GM12878 (cell line): ENCODE measurements at regions of chr6 and their contacts with region 1.

Region 1: GRCh38 chr6:69732640-69733039 is 64.2 kb downstream of the LMBRD1 start:
- DNase-seq: peak; percentile 11
- ATAC-seq: peak; percentile 90
- H3K4me3 ChIP-seq: no peak overlapping the region
- H3K27ac ChIP-seq: no peak overlapping the region
- H3K4me1 ChIP-seq: no peaks in the 10 kb centered on the region
- H3K27me3 ChIP-seq: no peaks in the 10 kb centered on the region
- CTCF ChIP-seq: peak; percentile 10 to 48 (median 29); a peak in 3 of 6 replicates
- EP300 ChIP-seq: no peak
- POLR2A ChIP-seq: no peak
- RAD21 ChIP-seq: peak; percentile 47

Region 2: GRCh38 chr6:69466979-69467570 is 265.6 kb before region 1 on chr6:
- CTCF ChIA-PET with region 1: no interaction called
- POLR2A ChIA-PET with region 1: no interaction called
- RAD21 ChIA-PET with region 1: no interaction called
- SMC1A ChIA-PET with region 1: no interaction called
- in situ Hi-C with region 1: no loop called
- intact Hi-C with region 1: no loop called
- DNase-seq: no peak
- ATAC-seq: no peak
- H3K4me3 ChIP-seq: no peak overlapping the region
- H3K27ac ChIP-seq: no peak overlapping the region
- H3K4me1 ChIP-seq: no peaks in the 10 kb centered on the region
- H3K27me3 ChIP-seq: no peaks in the 10 kb centered on the region
- CTCF ChIP-seq: no peak
- EP300 ChIP-seq: no peak
- POLR2A ChIP-seq: no peak
- RAD21 ChIP-seq: no peak

Region 3: DNA sequence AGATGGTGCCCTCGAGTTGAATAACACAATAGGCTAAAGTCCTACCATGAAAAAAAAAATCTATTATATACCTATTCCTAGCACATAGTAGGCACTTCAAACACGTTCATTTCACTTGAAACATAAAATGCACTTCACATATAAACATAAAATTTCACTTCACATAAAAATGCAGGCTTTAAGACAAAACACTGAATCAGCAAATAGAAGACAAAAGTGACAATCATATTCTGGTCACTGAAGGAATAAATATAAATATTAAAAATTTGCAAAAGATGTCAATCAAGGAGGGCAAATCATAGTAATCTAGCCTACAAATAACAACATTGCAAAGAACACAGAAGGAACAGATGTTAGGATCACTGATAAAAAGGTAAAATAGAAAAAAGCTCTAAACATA is 89.0 kb before region 1 on chr6:
- CTCF ChIA-PET with region 1: no interaction called
- POLR2A ChIA-PET with region 1: no interaction called
- RAD21 ChIA-PET with region 1: no interaction called
- SMC1A ChIA-PET with region 1: no interaction called
- in situ Hi-C with region 1: no loop called
- intact Hi-C with region 1: no loop called
- DNase-seq: no peak
- ATAC-seq: no peak
- H3K4me3 ChIP-seq: no peak overlapping the region
- H3K27ac ChIP-seq: no peak overlapping the region
- H3K4me1 ChIP-seq: no peaks in the 10 kb centered on the region
- H3K27me3 ChIP-seq: no peaks in the 10 kb centered on the region; a peak in 1 of 4 replicates
- CTCF ChIP-seq: no peak
- EP300 ChIP-seq: no peak
- POLR2A ChIP-seq: no peak
- RAD21 ChIP-seq: no peak

Region 4: GRCh38 chr6:69791065-69791471 is 58.4 kb after region 1 on chr6:
- CTCF ChIA-PET with region 1: interaction called, 8 read pairs
- POLR2A ChIA-PET with region 1: interaction called, 5 read pairs
- RAD21 ChIA-PET with region 1: interaction called, 12 read pairs
- SMC1A ChIA-PET with region 1: interaction called, 19 read pairs
- in situ Hi-C with region 1: no loop called
- intact Hi-C with region 1: no loop called
- DNase-seq: no peak
- ATAC-seq: peak; percentile 59
- H3K4me3 ChIP-seq: peak overlapping the region; percentile 43
- H3K27ac ChIP-seq: peak overlapping the region; percentile 46; the same call in 1 of the 2 replicates
- H3K4me1 ChIP-seq: peaks cover 27% of the 10 kb centered on the region
- H3K27me3 ChIP-seq: no peaks in the 10 kb centered on the region
- CTCF ChIP-seq: no peak
- EP300 ChIP-seq: no peak
- POLR2A ChIP-seq: no peak
- RAD21 ChIP-seq: no peak

Region 5: DNA sequence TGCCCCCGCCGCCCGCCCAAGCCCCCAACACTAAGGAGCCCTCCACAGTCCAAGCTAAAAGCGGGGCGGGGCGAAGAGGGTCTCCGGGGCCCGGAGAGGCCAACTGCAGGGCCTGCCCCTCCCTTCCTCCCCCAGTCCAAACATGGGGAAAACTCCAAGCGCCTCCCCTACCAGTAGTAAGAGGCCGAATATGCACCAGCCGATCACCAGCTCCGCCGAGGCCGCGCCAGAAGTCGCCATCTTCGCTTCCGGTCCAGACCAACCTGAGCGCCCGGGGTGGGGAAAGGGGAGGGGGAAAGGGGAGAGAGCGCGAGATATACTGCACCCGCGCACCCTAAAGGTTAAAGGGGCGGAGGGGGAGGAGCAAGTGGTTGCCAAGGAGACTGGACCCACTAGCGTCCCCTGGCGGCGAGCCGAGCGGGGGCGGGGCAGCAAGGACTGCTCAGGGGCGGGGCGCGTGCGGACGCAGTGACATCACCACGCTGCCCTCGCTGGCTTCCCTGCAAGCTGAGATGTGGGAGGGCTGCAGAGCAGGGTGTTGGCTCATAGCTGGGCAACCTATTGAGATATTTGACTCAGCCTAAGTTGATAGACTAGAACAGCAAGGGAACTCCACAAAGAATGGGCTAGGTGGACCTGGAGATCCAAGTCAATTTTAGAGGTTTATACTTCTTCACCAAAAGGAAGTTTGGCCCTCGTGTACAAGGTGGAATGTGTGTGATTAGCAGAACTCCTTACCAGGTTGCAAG is 64.2 kb after region 1 on chr6 and contains the start of gene LMBRD1:
- CTCF ChIA-PET with region 1: interaction called, 8 read pairs
- POLR2A ChIA-PET with region 1: no interaction called
- RAD21 ChIA-PET with region 1: interaction called, 12 read pairs
- SMC1A ChIA-PET with region 1: interaction called, 19 read pairs
- in situ Hi-C with region 1: no loop called
- intact Hi-C with region 1: no loop called
- DNase-seq: peak; percentile 91
- ATAC-seq: peak; percentile 91
- H3K4me3 ChIP-seq: peak within 1 kb of the TSS; percentile 80
- H3K27ac ChIP-seq: peak within 1 kb of the TSS; percentile 85
- H3K4me1 ChIP-seq: peaks cover 13% of the 10 kb centered on the region
- H3K27me3 ChIP-seq: no peaks in the 10 kb centered on the region
- CTCF ChIP-seq: peak; percentile 97 to 100 (median 99); a peak in 5 of 6 replicates
- EP300 ChIP-seq: 0 out of 4 replicates have a peak, but pooled peaks of 1 of the 2 experiments have one; percentile 5
- POLR2A ChIP-seq: peak; percentile 83
- RAD21 ChIP-seq: no peak
- polyA plus RNA-seq, gene LMBRD1: 43.2 to 82.1 TPM

Region 6: DNA sequence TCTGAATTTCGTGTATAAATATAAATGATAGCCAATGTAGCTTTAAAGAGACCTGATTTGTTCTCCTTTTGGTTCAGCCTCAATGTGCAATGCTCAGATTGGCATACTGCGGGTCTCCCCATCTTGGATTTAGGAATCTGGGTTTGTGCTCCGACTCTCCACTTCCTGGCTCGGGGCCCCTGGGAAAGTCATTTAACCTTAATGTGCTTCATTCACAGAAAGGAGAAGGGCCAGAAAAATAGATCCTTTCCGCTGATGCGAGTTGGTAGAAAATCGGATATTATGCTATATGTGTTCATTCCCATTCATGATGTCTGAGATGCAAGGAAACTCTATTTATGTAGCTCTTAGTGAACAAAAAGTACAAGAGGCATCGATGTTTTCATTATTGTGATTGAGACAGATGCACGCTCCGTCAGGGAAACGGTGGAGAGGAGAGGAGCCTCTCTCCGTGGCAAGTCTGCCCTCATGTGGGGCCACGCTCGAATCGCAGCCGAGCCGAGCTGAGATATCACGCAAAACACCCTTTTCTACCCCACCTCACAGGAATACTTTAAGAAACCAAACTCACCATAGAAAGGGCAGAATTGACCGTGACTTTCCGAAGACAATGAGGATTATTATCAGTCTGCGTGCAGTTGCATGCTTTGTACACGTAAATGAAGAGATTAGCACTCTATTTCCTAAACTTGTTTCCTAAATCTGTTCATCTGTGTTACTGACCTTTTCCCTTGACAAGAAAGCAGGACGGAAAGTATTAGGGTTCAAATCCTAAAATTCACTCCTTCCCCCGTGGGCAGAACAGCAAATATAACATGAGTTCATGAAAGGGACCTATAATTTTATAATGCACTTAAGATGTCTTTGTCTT is 433.7 kb after region 1 on chr6:
- CTCF ChIA-PET with region 1: interaction called, 4 read pairs
- POLR2A ChIA-PET with region 1: no interaction called
- RAD21 ChIA-PET with region 1: no interaction called
- SMC1A ChIA-PET with region 1: interaction called, 3 read pairs
- in situ Hi-C with region 1: no loop called
- intact Hi-C with region 1: loop called (anchors 5 kb)
- DNase-seq: no peak
- ATAC-seq: peak; percentile 93
- H3K4me3 ChIP-seq: no peak overlapping the region
- H3K27ac ChIP-seq: no peak overlapping the region
- H3K4me1 ChIP-seq: peaks cover 6% of the 10 kb centered on the region; the same call in 1 of the 2 replicates
- H3K27me3 ChIP-seq: no peaks in the 10 kb centered on the region
- CTCF ChIP-seq: peak; percentile 69 to 82 (median 75)
- EP300 ChIP-seq: no peak
- POLR2A ChIP-seq: no peak
- RAD21 ChIP-seq: peak; percentile 79